Activated CD4-positive, alpha-beta memory T cell treated with anti-CD3 and anti-CD28 coated beads for 36 hours (primary cell): ENCODE measurements at regions of chr6 and their contacts with region 1.

Region 1: DNA sequence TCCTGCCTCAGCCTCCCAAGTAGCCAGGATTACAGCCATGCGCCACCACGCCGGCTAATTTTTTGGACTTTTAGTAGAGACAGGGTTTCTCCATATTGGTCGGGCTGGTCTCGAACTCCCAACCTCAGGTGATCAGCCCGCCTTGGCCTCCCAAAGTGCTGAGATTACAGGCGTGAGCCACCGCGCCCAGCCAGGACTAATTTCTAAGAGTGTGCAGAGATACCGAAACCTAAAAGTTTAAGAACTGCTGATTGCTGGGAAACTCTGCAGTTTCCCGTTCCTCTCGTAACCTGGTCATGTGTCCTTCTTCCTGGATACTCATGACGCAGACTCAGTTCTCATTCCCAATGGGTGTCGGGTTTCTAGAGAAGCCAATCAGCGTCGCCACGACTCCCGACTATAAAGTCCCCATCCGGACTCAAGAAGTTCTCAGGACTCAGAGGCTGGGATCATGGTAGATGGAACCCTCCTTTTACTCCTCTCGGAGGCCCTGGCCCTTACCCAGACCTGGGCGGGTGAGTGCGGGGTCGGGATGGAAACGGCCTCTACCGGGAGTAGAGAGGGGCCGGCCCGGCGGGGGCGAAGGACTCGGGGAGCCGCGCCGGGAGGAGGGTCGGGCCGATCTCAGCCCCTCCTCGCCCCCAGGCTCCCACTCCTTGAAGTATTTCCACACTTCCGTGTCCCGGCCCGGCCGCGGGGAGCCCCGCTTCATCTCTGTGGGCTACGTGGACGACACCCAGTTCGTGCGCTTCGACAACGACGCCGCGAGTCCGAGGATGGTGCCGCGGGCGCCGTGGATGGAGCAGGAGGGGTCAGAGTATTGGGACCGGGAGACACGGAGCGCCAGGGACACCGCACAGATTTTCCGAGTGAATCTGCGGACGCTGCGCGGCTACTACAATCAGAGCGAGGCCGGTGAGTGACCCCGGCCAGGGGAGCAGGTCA is at the start of gene HLA-E:
- DNase-seq: peak; percentile 93
- H3K4me3 Mint-ChIP-seq: peak within 1 kb of the TSS; percentile 99
- H3K27ac Mint-ChIP-seq: peak within 1 kb of the TSS; percentile 99
- H3K4me1 Mint-ChIP-seq: peaks cover 41% of the 10 kb centered on the region
- H3K27me3 Mint-ChIP-seq: peaks cover 2% of the 10 kb centered on the region
- total RNA-seq, gene HLA-E: 481 to 485 TPM

Region 2: GRCh38 chr6:30219244-30219643 is 270.1 kb before region 1 on chr6:
- CTCF ChIA-PET with region 1: no interaction called
- POLR2A ChIA-PET with region 1: no interaction called
- intact Hi-C with region 1: no loop called
- DNase-seq: peak; percentile 60
- H3K4me3 Mint-ChIP-seq: no peak overlapping the region
- H3K27ac Mint-ChIP-seq: no peak overlapping the region
- H3K4me1 Mint-ChIP-seq: peaks cover 17% of the 10 kb centered on the region
- H3K27me3 Mint-ChIP-seq: no peaks in the 10 kb centered on the region

Region 3: GRCh38 chr6:30508890-30509736 is 19.8 kb after region 1 on chr6:
- CTCF ChIA-PET with region 1: interaction called, 9 read pairs
- POLR2A ChIA-PET with region 1: interaction called, 45 read pairs
- intact Hi-C with region 1: no loop called
- DNase-seq: peak; percentile 46
- H3K4me3 Mint-ChIP-seq: peak overlapping the region; percentile 31
- H3K27ac Mint-ChIP-seq: peak overlapping the region; percentile 86
- H3K4me1 Mint-ChIP-seq: peaks cover 55% of the 10 kb centered on the region
- H3K27me3 Mint-ChIP-seq: no peaks in the 10 kb centered on the region

Region 4: DNA sequence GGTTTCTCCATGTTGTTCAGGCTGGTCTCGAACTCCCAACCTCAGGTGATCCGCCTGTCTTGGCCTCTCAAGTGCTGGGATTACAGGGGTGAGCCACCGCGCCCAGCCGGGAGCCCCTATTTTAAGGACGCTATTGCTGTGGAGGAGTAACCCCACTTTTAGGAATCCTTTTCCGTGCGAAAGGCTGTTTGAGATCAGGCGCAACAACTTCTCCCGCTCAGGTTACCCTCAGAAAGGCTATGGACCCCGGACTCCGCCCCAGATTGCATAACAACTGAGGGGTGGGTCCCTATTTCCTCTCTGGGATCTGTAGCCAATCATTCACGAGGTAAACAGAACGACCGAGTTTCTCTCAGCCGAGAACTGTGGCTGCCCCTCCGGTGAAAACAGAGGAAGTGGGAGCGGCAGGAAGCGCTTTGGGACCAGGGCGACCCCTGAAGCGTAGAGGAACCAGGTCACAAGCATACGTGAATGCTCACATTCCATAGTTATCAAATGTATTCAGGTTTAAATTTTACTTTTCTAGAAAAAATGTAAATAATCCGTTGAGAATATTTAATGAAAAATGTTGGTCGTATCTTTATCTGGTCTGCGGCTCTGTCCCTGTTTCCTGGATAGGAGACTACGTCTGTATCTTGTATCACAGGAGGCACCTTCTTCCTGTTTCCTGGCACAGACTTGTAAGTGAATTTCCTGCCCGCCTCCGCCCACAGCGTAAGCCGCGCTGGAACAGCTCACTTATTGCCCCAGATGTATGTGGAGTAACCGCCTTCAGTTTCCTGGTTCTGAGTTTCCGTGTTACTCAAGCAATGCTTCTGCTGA is 26.8 kb after region 1 on chr6:
- CTCF ChIA-PET with region 1: interaction called, 7 read pairs
- POLR2A ChIA-PET with region 1: interaction called, 45 read pairs
- intact Hi-C with region 1: loop called (anchors 1 kb)
- DNase-seq: peak; percentile 97
- H3K4me3 Mint-ChIP-seq: peak overlapping the region; percentile 78
- H3K27ac Mint-ChIP-seq: peak overlapping the region; percentile 98
- H3K4me1 Mint-ChIP-seq: peaks cover 59% of the 10 kb centered on the region
- H3K27me3 Mint-ChIP-seq: no peaks in the 10 kb centered on the region

Region 5: GRCh38 chr6:30678964-30679726 is 189.8 kb after region 1 on chr6:
- CTCF ChIA-PET with region 1: no interaction called
- POLR2A ChIA-PET with region 1: interaction called, 4 read pairs
- intact Hi-C with region 1: loop called (anchors 2 kb)
- DNase-seq: peak; percentile 94
- H3K4me3 Mint-ChIP-seq: peak overlapping the region; percentile 100
- H3K27ac Mint-ChIP-seq: peak overlapping the region; percentile 99
- H3K4me1 Mint-ChIP-seq: peaks cover 16% of the 10 kb centered on the region
- H3K27me3 Mint-ChIP-seq: no peaks in the 10 kb centered on the region

Region 6: DNA sequence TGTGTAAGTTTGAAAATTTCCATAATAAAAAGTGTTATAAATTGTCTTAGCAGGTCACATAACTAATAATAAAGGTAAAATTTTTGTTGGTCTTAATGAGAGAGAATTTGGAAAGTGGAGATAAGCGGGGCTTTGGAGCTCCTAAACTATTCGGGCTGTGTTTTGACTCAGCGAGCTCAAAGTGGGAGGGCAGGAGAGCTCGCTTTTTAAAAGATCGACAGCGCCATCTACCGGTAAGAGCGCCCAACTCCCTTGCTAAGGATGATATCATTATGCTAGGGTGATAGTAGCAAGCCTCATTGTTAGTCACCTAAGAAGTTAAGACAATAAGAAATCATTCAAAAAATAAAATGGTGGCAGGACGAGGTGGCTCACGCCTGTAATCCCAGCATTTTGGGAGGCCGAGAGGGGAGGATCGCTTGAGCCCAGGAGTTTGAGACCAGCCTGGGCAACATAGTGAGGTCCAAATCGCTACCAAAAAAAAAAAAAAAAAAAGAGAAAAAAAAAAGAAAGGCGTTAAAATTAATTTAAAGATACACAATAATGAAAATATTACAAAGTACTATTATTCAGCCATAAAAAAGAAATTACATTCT is 598.2 kb after region 1 on chr6:
- CTCF ChIA-PET with region 1: interaction called, 3 read pairs
- POLR2A ChIA-PET with region 1: no interaction called
- intact Hi-C with region 1: loop called (anchors 10 kb)
- DNase-seq: peak; percentile 92
- H3K4me3 Mint-ChIP-seq: peak overlapping the region; percentile 12
- H3K27ac Mint-ChIP-seq: peak overlapping the region; percentile 45
- H3K4me1 Mint-ChIP-seq: peaks cover 11% of the 10 kb centered on the region
- H3K27me3 Mint-ChIP-seq: no peaks in the 10 kb centered on the region

Region 7: GRCh38 chr6:31197559-31198305 is 708.4 kb after region 1 on chr6:
- CTCF ChIA-PET with region 1: no interaction called
- POLR2A ChIA-PET with region 1: no interaction called
- intact Hi-C with region 1: no loop called
- DNase-seq: peak; percentile 97
- H3K4me3 Mint-ChIP-seq: peak overlapping the region; percentile 89
- H3K27ac Mint-ChIP-seq: peak overlapping the region; percentile 83
- H3K4me1 Mint-ChIP-seq: peaks cover 53% of the 10 kb centered on the region
- H3K27me3 Mint-ChIP-seq: no peaks in the 10 kb centered on the region